Mammary epithelial cell (primary cell): ENCODE measurements at regions of chr7 and their contacts with region 1.

Region 1: DNA sequence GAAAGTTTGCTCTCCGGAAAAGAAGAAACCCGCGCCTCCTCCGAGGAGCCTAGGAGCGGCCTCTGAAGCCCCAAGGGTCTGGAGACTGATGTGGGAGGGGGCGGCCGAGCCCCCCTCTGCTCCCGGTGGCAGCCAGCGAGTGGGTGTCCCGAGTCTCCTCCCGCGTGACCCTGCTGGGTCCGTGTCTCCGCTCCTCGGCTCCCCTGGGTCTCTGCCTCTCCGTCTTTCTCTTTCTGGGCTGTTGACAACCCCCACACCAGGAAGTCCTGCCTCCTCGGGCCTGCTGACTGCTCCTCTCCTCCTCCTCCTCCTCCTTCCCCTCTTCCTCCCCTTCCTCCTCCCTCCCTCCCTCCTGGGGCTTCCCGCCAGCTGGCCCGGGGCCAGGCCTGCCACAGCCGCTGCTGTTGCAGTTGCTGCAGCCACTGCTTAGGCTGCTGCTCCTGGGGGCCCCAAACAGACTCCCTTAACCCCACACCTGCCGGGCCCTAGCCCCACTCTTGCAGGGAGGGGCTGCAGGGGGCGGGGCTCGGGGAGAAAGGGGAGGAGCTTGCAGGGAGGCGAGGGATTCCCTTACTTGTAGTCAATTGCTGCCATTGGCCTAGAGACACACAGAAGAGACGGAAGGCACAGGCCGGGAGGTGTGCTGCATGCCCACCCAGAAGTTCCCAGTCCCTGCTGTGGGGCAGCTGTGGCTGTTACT is at the start of gene TSC22D4:
- DNase-seq: peak; percentile 90
- H3K4me3 ChIP-seq: peak within 1 kb of the TSS; percentile 92 to 94 (median 93)
- H3K27ac ChIP-seq: peak within 1 kb of the TSS; percentile 57
- H3K4me1 ChIP-seq: peaks cover 23% of the 10 kb centered on the region
- H3K27me3 ChIP-seq: no peaks in the 10 kb centered on the region
- CTCF ChIP-seq: no peak
- total RNA-seq, gene TSC22D4: 12.0 to 35.2 TPM

Region 2: GRCh38 chr7:100366411-100367238 is 112.5 kb before region 1 on chr7:
- CTCF ChIA-PET with region 1: no interaction called
- dilution Hi-C with region 1: no loop called
- in situ Hi-C with region 1: no loop called
- intact Hi-C with region 1: no loop called
- DNase-seq: peak; percentile 19
- H3K4me3 ChIP-seq: no peak overlapping the region
- H3K27ac ChIP-seq: no peak overlapping the region
- H3K4me1 ChIP-seq: peaks cover under 1% of the 10 kb centered on the region
- H3K27me3 ChIP-seq: no peaks in the 10 kb centered on the region
- CTCF ChIP-seq: no peak

Region 3: GRCh38 chr7:100428967-100429636 is 50.0 kb before region 1 on chr7:
- CTCF ChIA-PET with region 1: no interaction called
- dilution Hi-C with region 1: no loop called
- in situ Hi-C with region 1: no loop called
- intact Hi-C with region 1: loop called (anchors 2 kb)
- DNase-seq: peak; percentile 99
- H3K4me3 ChIP-seq: peak overlapping the region; percentile 83 to 91 (median 84)
- H3K27ac ChIP-seq: peak overlapping the region; percentile 95
- H3K4me1 ChIP-seq: peaks cover 20% of the 10 kb centered on the region
- H3K27me3 ChIP-seq: no peaks in the 10 kb centered on the region
- CTCF ChIP-seq: no peak

Region 4: DNA sequence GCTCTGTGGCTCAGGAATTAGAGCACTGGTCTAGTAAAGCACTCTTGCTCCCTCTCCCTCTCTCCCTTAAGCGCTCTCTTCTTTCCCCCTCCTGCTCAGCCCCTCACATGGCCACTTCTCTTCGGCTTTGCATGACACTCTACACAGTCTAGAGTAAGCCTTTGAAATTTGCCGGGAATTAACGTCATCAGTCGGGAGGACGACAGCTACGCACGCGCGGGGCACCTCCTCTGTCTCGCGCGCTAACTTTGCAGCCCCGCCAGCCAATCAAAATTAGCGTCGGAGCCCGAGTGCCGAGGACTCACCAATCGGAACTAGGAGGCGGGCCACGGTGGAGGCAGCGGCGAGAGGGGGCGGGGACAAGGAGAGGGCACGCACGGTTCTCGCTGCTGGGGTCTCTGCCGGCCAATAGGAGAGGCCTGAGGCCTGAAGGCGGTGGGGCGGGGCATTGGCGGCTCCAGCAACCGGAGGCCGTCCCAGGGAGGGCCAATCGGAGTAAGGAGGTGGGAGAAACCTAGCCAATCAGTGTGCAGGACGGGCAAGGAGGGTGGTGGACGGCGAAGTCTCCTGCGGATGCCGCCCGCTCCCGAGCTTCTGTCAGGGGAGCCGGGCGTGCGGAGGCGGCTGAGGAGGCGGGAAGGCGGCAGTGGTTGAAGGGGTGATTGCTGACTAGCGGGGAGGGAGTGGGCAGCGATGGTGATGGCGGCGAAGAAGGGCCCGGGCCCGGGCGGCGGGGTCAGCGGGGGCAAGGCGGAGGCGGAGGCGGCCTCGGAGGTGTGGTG is 59.7 kb after region 1 on chr7 and contains the start of gene AGFG2:
- CTCF ChIA-PET with region 1: interaction called, 3 read pairs
- dilution Hi-C with region 1: no loop called
- in situ Hi-C with region 1: no loop called
- intact Hi-C with region 1: loop called (anchors 2 kb)
- DNase-seq: peak; percentile 100
- H3K4me3 ChIP-seq: peak within 1 kb of the TSS; percentile 60 to 72 (median 66)
- H3K27ac ChIP-seq: no peak within 1 kb of the TSS
- H3K4me1 ChIP-seq: peaks cover 7% of the 10 kb centered on the region
- H3K27me3 ChIP-seq: no peaks in the 10 kb centered on the region
- CTCF ChIP-seq: no peak
- total RNA-seq, gene AGFG2: 8.0 to 10.9 TPM

Region 5: DNA sequence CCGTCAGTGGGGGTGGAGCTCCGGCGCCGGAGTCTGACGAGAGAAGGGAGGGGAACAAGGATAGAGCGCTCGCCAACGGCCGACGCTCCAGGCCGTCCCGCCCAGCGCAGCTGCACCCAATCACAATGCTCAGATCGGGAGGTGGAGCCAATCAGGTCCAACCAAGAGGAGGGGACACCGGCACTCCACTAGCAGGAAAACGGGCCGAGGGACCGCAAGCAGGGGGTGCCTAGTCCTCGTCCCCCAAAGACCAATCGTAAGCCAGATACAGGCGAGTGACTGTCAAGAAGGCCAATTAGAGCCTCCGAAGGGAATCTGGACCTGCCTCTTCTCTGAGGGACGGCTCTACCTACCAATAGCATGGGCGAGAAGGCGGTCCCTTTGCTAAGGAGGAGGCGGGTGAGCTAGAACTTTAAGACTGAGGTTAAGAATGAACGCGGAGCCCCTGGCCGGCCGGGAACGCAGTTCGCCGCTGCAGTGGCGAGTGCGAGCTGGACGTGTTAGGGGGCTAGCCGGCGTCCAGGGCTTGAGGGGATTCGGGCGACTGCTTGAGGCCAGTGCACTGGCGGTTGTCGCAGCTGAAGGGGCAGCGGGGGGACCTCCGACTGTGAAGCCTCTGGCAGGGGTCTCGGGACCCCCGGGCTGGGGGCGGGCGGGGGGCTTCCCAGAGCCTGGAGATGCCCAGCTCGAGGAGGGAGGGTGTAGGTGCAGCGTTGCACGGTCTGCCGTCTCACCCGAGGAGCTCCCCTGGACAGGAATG is 107.3 kb after region 1 on chr7 and contains the start of gene FBXO24:
- CTCF ChIA-PET with region 1: no interaction called
- dilution Hi-C with region 1: no loop called
- in situ Hi-C with region 1: loop called in 1 of 2 experiments (anchors 10 kb)
- intact Hi-C with region 1: no loop called
- DNase-seq: peak; percentile 100
- H3K4me3 ChIP-seq: peak within 1 kb of the TSS; percentile 80 to 98 (median 88)
- H3K27ac ChIP-seq: peak within 1 kb of the TSS; percentile 74
- H3K4me1 ChIP-seq: peaks cover 20% of the 10 kb centered on the region
- H3K27me3 ChIP-seq: no peaks in the 10 kb centered on the region
- CTCF ChIP-seq: no peak
- total RNA-seq, gene FBXO24: 0.17 to 0.45 TPM

Region 6: DNA sequence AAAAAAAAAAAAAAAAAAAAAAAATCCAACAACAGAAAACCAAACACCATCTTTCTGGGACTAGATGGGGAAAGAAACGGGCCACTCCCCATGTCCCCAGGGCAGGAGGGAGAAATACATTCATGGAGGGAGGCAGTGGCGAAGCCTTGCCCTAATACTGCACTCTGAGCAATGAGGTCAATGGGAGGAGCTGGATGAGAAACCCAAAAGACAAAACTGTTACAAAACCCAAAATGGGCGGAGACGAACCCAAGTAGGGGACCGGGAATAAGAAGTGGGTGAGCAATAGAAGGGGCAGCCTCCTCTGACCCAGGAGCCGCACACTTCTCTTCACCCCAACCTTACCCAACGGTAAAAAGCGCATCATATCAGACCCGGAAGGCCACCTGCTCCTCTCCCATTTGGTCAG is 201.1 kb after region 1 on chr7:
- CTCF ChIA-PET with region 1: no interaction called
- dilution Hi-C with region 1: no loop called
- in situ Hi-C with region 1: loop called in 1 of 2 experiments (anchors 10 kb)
- intact Hi-C with region 1: no loop called
- DNase-seq: no peak
- H3K4me3 ChIP-seq: no peak overlapping the region
- H3K27ac ChIP-seq: no peak overlapping the region
- H3K4me1 ChIP-seq: peaks cover 5% of the 10 kb centered on the region
- H3K27me3 ChIP-seq: no peaks in the 10 kb centered on the region
- CTCF ChIP-seq: no peak